Calu3 (cell line): ENCODE measurements at regions of chr6 and their contacts with region 1.

Region 1: DNA sequence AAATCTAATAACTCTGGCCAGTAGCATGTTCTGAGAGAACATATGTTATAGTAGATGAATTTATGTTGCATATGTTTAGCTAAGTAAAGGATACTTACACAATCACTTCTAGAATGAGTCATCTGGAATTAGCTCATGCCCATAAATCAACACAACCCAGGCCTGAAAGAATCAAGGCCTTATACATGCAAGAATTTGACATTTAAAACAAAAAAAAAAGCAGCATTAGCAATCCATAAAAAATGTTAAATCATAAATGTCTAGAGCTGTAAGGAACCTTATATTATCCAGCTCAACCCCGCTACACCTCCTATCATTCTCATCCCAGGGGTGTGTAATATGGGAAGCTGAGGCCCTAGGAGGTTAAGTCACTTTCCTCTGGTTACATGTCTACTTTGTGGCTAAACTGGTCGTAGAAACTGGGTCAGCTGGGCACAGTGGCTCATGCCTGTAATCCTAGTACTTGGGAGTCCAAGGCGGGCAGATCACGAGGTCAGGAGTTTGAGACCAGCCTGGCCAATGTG is 105.2 kb upstream of the CARMIL1 start:
- DNase-seq: peak; percentile 83
- H3K4me3 Mint-ChIP-seq: no peak overlapping the region
- H3K27ac Mint-ChIP-seq: peak overlapping the region; percentile 73
- H3K4me1 Mint-ChIP-seq: peaks cover 57% of the 10 kb centered on the region
- H3K27me3 Mint-ChIP-seq: no peaks in the 10 kb centered on the region
- CTCF ChIP-seq: no peak

Region 2: DNA sequence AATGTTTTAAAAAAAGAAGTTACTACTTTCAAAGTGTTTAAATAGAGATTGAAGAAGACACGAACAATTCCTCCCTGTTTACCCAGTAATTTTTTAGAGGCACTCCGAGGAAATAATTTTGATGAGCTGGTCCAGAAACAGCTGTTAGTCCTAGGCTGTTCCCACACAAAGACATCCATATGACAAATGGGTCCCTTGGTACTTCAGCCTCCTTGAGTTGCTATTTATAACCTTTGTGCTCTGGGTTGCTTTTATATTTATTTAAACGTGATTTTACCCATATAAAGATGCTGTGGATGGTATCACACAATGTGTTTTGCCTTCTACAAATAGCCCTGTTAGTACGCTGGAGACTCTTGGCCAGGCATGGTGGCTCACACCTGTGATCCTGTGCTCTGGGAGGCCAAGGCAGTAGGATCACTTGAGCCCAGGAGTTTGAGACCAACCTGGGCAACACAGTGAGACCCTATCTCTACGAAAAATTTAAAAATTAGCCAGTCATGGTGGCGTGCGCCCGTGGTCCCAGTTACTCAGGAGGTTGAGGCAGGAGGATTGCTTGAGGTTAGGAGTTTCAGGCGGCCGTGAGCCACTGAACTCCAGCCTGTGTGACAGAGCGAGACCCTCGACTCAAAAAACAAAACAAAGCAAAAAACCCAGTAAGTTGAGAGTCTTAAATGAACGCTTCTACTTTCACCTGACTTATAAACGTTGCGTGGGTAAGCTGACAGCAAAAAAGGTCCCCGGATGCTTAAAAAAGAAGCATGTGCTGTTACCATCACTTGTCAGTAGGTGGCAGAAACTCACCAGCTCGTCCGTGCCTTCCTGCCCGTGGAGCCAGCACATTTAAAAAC is 318.4 kb before region 1 on chr6:
- CTCF ChIA-PET with region 1: no interaction called
- intact Hi-C with region 1: loop called (anchors 10 kb)
- DNase-seq: peak; percentile 81
- H3K4me3 Mint-ChIP-seq: no peak overlapping the region
- H3K27ac Mint-ChIP-seq: no peak overlapping the region
- H3K4me1 Mint-ChIP-seq: peaks cover 29% of the 10 kb centered on the region
- H3K27me3 Mint-ChIP-seq: no peaks in the 10 kb centered on the region
- CTCF ChIP-seq: peak; percentile 94

Region 3: GRCh38 chr6:25070547-25071366 is 103.3 kb before region 1 on chr6:
- CTCF ChIA-PET with region 1: interaction called, 5 read pairs
- intact Hi-C with region 1: loop called (anchors 2 kb)
- DNase-seq: peak; percentile 94
- H3K4me3 Mint-ChIP-seq: no peak overlapping the region
- H3K27ac Mint-ChIP-seq: no peak overlapping the region
- H3K4me1 Mint-ChIP-seq: no peaks in the 10 kb centered on the region
- H3K27me3 Mint-ChIP-seq: peaks cover 27% of the 10 kb centered on the region
- CTCF ChIP-seq: peak; percentile 100

Region 4: DNA sequence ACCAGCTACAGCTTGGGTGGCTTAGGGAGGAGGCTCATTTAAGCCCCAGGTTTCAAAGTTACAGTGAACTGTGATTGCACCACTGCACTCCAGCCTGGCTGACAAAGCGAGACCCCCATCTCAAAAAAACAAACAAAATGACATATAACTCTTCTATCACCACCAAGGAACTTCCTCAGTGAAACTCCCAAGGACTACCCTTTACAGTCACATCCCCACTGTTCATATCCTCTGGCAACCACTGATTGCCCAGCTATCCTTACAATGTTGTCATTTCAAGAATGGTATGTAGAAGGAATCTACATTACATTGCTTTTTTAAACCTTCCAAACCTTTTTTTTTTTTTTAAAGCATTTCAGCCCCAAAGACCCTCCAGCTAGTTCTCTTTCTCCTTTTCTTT is 17.9 kb before region 1 on chr6:
- CTCF ChIA-PET with region 1: interaction called, 11 read pairs
- intact Hi-C with region 1: loop called (anchors 1 kb)
- DNase-seq: no peak
- H3K4me3 Mint-ChIP-seq: no peak overlapping the region
- H3K27ac Mint-ChIP-seq: no peak overlapping the region
- H3K4me1 Mint-ChIP-seq: peaks cover 23% of the 10 kb centered on the region
- H3K27me3 Mint-ChIP-seq: peaks cover 15% of the 10 kb centered on the region
- CTCF ChIP-seq: no peak

Region 5: DNA sequence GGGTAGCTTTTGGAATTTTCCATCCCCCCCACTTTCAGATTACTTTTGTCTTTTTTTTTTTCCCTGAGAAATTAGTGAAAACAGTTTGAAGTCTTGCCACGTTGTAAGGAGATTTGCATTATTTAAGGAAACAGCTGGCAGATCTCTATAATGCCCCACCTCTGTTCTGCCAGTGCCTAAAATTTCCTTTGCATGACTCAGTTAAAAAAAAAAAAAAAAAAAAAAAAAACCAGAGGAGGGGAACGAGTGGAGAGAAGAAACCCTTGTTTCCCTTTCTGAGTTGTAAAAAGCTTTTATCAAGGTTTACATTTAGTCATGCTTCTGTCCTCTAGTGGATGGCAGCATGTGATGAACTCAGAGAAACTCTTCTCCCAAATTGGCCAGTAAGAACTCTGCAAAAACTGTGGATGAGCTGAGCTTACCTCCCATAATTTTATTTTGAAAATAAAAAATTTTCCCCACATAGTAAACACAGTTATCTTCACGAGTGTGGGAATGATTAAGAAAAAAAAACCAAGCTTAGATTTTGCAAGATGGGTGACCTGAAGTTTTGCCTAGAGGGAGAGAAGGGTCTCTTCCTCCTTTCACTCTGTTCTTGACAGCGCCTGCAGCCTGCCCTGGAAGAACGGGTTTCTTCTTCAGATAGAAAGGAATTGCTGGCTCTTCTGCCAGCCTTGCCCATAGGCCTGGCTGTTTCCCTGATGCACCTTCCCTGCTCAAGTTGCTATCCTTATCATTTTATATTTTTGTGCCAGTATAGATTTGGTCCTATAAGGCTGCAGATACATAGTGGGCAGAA is 138.9 kb after region 1 on chr6:
- CTCF ChIA-PET with region 1: no interaction called
- intact Hi-C with region 1: loop called (anchors 2 kb)
- DNase-seq: peak; percentile 51
- H3K4me3 Mint-ChIP-seq: peak overlapping the region; percentile 54
- H3K27ac Mint-ChIP-seq: peak overlapping the region; percentile 85
- H3K4me1 Mint-ChIP-seq: peaks cover 84% of the 10 kb centered on the region
- H3K27me3 Mint-ChIP-seq: no peaks in the 10 kb centered on the region
- CTCF ChIP-seq: no peak